ENCODE measurements at regions of chr1 and their contacts with region 1.

Region 1: DNA sequence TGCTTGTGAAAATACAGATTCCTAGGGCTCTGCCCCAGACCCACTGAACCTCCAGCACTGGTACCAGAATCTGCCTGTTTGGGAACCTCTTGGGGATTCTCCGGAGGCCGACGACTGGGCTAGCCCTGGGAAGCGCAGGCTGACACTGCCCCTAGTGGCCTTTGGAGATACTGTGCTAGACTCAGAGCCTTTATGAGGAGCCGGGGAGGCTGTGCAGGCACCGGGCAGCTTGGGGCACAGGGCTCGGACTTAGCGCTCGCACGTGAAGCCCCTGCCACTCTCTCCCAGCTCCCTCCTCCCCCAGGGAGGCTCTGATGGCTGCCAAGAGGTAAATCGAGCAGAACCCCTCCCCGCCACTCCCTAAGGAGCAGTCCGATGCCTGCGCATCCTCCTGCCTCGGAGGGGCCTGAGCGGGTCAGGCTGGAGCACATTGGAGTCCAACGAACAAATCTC is 144.6 kb upstream of the TNR start:
- DNase-seq: no peak
- H3K4me3 ChIP-seq: no peak overlapping the region
- H3K27ac ChIP-seq: no peak overlapping the region
- H3K4me1 ChIP-seq: peaks cover 9 to 16% (median 12%) of the 10 kb centered on the region in 4 donors
- H3K27me3 ChIP-seq: no peaks in the 10 kb centered on the region
- CTCF ChIP-seq: peak; percentile 47 to 75 (median 61)
- EP300 ChIP-seq: no peak
- POLR2A ChIP-seq: no peak

Region 2: DNA sequence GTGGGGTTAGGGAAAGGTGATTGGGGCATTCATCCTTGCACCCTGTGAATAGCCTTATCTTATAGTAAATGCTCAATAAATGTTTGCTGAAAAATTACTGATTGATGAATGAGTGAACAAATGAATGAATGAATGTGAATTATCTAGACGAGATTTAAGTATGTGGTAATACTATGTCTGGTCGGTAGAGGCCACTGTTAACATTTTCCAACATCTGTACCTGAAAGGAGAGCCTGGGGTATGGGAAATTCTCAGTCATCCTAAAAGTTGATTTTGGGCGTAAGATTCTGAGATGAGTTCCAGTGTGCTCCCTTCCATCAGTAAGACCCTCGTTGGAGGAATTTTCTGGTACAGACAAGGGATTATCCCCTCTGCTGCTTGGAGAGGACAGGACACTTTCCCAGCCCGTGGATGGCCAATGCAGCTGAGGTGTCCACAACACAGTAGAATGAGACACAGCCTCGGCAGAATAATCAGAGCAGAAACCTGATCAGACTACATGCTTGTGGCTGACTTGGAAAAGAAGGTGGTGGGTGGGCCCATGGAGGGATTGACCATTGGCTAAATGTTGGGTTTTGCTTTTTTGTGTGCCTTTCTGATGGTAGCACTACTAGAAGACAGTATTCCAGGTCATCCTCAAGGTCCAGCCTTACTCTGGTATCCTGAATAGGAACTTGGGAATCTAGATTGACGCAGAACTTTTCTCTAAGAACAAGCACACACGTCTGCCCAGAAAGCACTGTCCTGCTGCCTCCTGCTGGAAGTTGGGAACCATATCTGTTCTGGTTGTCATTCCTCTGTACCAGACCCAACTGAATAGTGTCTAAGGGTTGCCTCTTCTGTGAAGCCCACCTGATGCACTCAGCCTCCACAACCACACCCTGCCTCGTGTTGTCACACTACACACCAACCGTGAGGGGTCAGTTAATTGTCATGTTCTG is 406.6 kb before region 1 on chr1:
- intact Hi-C with region 1: loop called (anchors 5 kb)
- DNase-seq: no peak
- H3K4me3 ChIP-seq: no peak overlapping the region
- H3K27ac ChIP-seq: no peak overlapping the region
- H3K4me1 ChIP-seq: no peaks in the 10 kb centered on the region
- H3K27me3 ChIP-seq: peaks cover 0 to 9% (median 0%) of the 10 kb centered on the region in 4 donors
- CTCF ChIP-seq: peak; percentile 35 to 60 (median 55)
- EP300 ChIP-seq: no peak
- POLR2A ChIP-seq: no peak

Region 3: DNA sequence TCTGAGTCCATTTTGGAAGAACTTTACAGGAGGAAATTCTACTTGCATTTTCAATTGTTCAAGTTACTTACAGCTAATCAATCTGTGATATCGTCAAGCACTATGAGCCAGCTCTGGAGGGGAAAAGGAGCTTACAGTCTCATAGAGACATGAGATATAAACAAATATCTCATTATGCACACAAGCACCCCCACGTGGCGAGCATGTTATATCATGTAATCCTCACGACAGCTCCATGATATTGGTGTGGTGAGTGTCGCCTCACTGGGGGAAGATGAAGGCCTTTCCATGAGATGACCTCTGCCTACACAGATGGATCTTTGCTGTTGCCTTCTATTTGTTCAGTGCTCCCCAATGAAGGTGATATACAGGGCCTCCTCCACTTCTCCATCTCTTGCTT is 179.2 kb before region 1 on chr1:
- intact Hi-C with region 1: no loop called
- DNase-seq: no peak
- H3K4me3 ChIP-seq: no peak overlapping the region
- H3K27ac ChIP-seq: no peak overlapping the region
- H3K4me1 ChIP-seq: no peaks in the 10 kb centered on the region
- H3K27me3 ChIP-seq: no peaks in the 10 kb centered on the region
- CTCF ChIP-seq: no peak
- EP300 ChIP-seq: no peak
- POLR2A ChIP-seq: no peak

Region 4: GRCh38 chr1:175911138-175911537 is 23.1 kb after region 1 on chr1:
- intact Hi-C with region 1: no loop called
- DNase-seq: no peak
- H3K4me3 ChIP-seq: no peak overlapping the region
- H3K27ac ChIP-seq: no peak overlapping the region
- H3K4me1 ChIP-seq: no peaks in the 10 kb centered on the region
- H3K27me3 ChIP-seq: no peaks in the 10 kb centered on the region
- CTCF ChIP-seq: no peak
- EP300 ChIP-seq: no peak
- POLR2A ChIP-seq: no peak

Measured in esophagus muscularis mucosa (tissue), 4 donors.